ENCODE measurements at regions of chr10 and their contacts with region 1.

Region 1: GRCh38 chr10:110279407-110279986 is 25.2 kb downstream of the SMNDC1 start:
- DNase-seq: no peak
- H3K4me3 ChIP-seq: no peak overlapping the region
- H3K27ac ChIP-seq: no peak overlapping the region
- H3K4me1 ChIP-seq: peaks cover 26% of the 10 kb centered on the region
- H3K27me3 ChIP-seq: no peaks in the 10 kb centered on the region
- CTCF ChIP-seq: peak; percentile 52 to 69 (median 63)
- POLR2A ChIP-seq: no peak

Region 2: DNA sequence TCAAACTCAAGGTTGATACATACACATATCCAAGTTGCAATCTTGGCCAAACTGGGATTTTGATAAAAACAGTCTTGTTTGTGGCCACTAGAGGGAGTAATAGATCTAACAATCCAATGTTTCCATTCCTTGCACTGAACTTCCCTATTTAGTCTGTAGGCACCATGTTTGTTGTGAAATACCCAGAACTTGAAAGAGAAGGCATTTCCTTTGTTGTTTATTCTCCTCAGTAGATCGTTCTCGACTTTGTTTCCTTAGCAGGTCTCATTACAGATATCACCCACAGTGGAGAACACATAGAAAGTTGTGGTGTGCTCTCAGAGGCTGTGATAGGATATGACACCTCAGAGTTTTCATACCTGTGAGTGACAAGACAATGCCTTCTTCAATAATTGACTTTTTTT is 142.4 kb before region 1 on chr10:
- intact Hi-C with region 1: loop called (anchors 10 kb)
- DNase-seq: no peak
- H3K4me3 ChIP-seq: no peak overlapping the region
- H3K27ac ChIP-seq: peak overlapping the region; percentile 19
- H3K4me1 ChIP-seq: peaks cover 21% of the 10 kb centered on the region
- H3K27me3 ChIP-seq: no peaks in the 10 kb centered on the region
- CTCF ChIP-seq: peak; percentile 69 to 94 (median 92)
- POLR2A ChIP-seq: no peak

Region 3: DNA sequence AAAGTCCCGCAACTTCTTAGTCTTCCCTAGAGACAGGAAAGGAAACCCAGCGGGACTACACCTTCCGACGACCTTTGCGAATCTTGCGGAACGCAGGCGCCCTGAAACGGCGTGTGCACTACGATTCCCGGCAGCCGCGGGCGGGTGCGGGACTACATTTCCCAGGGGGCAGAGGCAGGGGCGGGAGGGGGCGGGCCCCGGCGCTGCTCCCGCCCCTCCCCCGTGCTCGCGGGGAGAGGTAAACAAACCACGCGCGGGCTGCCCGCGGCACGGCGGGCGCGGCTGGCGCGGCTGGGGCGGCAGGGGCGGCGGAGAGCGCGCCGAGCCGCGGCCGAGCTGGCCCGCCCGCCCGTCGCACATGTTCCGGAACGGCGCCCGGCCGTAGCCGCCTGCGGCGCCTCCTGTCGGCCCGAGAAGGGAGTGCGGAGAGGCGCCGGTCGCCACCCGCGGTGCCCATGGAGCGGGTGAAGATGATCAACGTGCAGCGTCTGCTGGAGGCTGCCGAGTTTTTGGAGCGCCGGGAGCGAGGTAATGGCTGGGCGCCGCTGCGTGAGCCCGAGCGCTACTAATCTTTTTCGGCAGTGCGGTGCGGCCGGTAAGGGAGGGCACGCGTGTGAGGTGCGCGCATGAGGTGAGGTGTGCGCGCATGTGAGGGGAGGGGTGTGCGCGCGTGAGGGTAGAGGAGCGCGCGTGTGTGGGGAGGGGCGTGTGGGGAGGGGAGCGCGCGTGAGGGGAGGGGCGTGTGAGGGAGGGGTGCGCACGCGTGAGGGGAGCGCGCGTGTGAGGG is 53.5 kb before region 1 on chr10:
- intact Hi-C with region 1: loop called (anchors 10 kb)
- DNase-seq: no peak
- H3K4me3 ChIP-seq: peak overlapping the region; percentile 79 to 93
- H3K27ac ChIP-seq: peak overlapping the region; percentile 96
- H3K4me1 ChIP-seq: peaks cover 23% of the 10 kb centered on the region
- H3K27me3 ChIP-seq: no peaks in the 10 kb centered on the region
- CTCF ChIP-seq: peak; percentile 50 to 71 (median 67)
- POLR2A ChIP-seq: peak in 1 of 2 donors; percentile 3

Region 4: DNA sequence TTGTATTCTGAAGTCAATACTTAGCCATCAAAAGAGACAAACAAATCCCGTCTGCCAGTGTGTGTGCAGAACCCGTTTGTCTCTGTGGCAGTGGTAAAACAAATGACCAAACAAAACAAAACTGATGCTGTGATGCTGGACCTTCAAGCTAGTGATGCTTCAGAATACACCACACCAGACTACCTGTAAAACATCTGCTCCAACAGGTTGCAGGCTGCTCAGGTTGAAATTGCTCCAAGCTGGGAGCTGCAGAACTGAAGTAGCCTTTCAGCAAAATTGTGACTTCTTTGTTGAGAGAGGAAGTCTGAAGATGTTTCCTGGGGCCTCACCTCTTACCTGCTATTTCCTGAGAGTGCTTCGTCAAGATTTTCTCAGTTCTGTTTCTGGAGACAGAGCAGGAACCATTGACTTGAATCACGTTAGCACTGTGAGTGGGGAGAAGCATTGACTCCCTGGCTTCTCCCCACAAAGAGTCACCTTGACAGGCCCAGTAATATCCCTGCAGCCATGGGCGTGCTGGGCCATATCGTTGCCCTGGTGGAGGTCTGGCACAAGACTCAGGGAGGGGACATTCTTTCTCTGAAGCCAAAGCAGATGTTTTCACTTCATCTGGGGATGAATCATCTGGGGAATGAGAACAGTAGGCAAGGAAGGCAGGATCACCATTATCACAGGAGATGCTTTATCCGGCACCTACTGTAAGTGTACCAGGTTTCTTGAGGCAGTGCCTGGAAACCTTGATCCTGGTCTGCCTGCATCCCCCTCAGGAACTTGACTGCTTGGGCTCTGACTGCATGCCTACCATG is 444.8 kb after region 1 on chr10:
- intact Hi-C with region 1: no loop called
- DNase-seq: no peak
- H3K4me3 ChIP-seq: no peak overlapping the region
- H3K27ac ChIP-seq: no peak overlapping the region
- H3K4me1 ChIP-seq: no peaks in the 10 kb centered on the region
- H3K27me3 ChIP-seq: no peaks in the 10 kb centered on the region
- CTCF ChIP-seq: no peak
- POLR2A ChIP-seq: no peak

Measured in vagina (tissue), 2 donors.